ENCODE measurements at regions of chr6 and their contacts with region 1.

Region 1: GRCh38 chr6:90285611-90286381 is 10.8 kb downstream of the BACH2 start:
- DNase-seq: peak; percentile 51
- H3K4me3 Mint-ChIP-seq: peak overlapping the region; percentile 71
- H3K27ac Mint-ChIP-seq: peak overlapping the region; percentile 90
- H3K4me1 Mint-ChIP-seq: peaks cover 83% of the 10 kb centered on the region
- H3K27me3 Mint-ChIP-seq: no peaks in the 10 kb centered on the region

Region 2: GRCh38 chr6:89352278-89353117 is 933.3 kb before region 1 on chr6 and contains the start of gene UBE2J1:
- intact Hi-C with region 1: loop called (anchors 5 kb)
- DNase-seq: peak; percentile 74
- H3K4me3 Mint-ChIP-seq: peak within 1 kb of the TSS; percentile 96
- H3K27ac Mint-ChIP-seq: peak within 1 kb of the TSS; percentile 92
- H3K4me1 Mint-ChIP-seq: peaks cover 66% of the 10 kb centered on the region
- H3K27me3 Mint-ChIP-seq: no peaks in the 10 kb centered on the region
- total RNA-seq, gene UBE2J1: 34.4 and 34.8 TPM in 2 replicates

Region 3: GRCh38 chr6:90144396-90144795 is 141.4 kb before region 1 on chr6:
- intact Hi-C with region 1: loop called (anchors 1 kb)
- DNase-seq: no peak
- H3K4me3 Mint-ChIP-seq: peak overlapping the region; percentile 54
- H3K27ac Mint-ChIP-seq: peak overlapping the region; percentile 92
- H3K4me1 Mint-ChIP-seq: peaks cover 68% of the 10 kb centered on the region
- H3K27me3 Mint-ChIP-seq: no peaks in the 10 kb centered on the region

Region 4: GRCh38 chr6:90212274-90212673 is 73.5 kb before region 1 on chr6:
- intact Hi-C with region 1: no loop called
- DNase-seq: no peak
- H3K4me3 Mint-ChIP-seq: no peak overlapping the region
- H3K27ac Mint-ChIP-seq: no peak overlapping the region
- H3K4me1 Mint-ChIP-seq: peaks cover 37% of the 10 kb centered on the region
- H3K27me3 Mint-ChIP-seq: no peaks in the 10 kb centered on the region

Region 5: DNA sequence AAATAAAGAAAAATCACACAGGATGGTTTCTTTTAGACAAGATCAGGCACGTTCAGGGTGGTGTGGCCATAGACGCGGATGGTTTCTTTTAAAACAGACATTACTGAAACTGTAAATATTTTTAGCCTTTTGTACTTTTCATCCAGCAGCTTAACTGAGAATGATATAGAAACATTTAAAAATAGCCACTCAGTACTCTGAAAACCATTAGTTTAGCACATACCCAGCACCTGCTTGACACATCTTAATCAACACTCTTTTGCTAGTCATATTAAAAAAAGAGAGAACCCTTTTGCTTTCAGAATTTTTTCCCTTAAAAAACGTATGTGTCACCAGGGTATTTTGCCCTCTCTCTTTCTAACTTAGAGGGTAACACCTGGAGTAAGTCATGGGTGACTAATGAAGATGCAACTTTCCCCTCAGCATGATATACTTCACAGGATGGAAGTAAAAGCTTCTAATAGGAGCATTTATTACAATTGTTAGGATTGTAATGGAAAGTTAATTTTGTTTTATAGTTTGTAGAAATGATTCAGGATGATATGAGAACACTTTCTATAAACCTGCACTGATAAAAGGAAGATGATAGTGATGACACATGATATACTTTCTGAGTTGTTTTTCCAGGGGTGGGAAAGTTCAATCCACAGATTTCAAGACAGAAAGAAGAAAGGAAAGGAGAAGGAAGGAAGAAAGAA is 34.4 kb before region 1 on chr6:
- intact Hi-C with region 1: loop called (anchors 1 kb)
- DNase-seq: no peak
- H3K4me3 Mint-ChIP-seq: peak overlapping the region; percentile 48
- H3K27ac Mint-ChIP-seq: peak overlapping the region; percentile 83
- H3K4me1 Mint-ChIP-seq: peaks cover 71% of the 10 kb centered on the region
- H3K27me3 Mint-ChIP-seq: no peaks in the 10 kb centered on the region

Region 6: DNA sequence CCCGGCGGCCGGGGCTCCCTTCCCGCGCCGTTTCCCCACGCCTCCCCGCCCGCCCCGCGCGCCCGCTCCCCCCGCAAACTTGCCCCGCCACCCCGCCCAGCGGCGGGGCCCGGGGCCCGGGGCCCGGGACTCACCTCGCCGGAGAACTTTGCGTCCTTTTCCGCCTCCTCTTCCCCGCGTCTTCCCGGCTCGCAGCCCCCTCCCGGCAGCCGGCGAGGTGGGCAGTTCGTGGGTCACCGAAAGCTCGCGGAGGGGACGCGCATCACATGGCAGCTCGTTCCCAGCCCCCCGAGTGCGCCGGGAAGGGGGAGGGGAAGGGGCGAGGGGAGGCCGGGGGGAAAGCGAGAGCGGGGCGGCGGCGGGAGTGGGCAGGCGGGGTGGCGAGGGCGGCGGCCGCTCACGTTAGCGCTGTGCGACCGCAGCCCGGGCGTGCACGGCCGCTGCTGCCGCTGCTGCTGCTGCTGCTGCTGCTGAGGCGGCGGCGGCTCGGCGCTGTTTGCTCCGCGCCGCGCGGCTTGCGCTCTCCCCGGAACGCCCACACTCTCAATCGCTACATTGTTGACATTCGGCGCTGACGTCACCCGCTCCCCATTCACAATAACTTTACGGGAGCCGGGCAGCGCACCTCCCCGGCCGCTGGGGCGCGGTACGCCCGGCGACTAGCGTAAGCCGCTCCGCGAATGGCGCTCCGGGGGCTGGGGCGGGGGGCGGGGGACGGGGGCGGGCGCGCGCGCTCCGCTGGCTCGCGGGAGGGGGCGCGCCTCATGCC is 10.7 kb after region 1 on chr6 and contains the start of gene BACH2:
- intact Hi-C with region 1: loop called (anchors 1 kb)
- DNase-seq: peak; percentile 91
- H3K4me3 Mint-ChIP-seq: peak within 1 kb of the TSS; percentile 91
- H3K27ac Mint-ChIP-seq: peak within 1 kb of the TSS; percentile 86
- H3K4me1 Mint-ChIP-seq: peaks cover 50% of the 10 kb centered on the region
- H3K27me3 Mint-ChIP-seq: peaks cover 13% of the 10 kb centered on the region
- total RNA-seq, gene BACH2: 88.8 and 89.7 TPM in 2 replicates

Region 7: GRCh38 chr6:90411292-90411781 is 125.5 kb after region 1 on chr6:
- intact Hi-C with region 1: loop called (anchors 1 kb)
- DNase-seq: peak; percentile 62
- H3K4me3 Mint-ChIP-seq: no peak overlapping the region
- H3K27ac Mint-ChIP-seq: peak overlapping the region; percentile 81
- H3K4me1 Mint-ChIP-seq: peaks cover 81% of the 10 kb centered on the region
- H3K27me3 Mint-ChIP-seq: no peaks in the 10 kb centered on the region

Region 8: GRCh38 chr6:90472744-90473143 is 186.9 kb after region 1 on chr6:
- intact Hi-C with region 1: loop called (anchors 1 kb)
- DNase-seq: peak; percentile 57
- H3K4me3 Mint-ChIP-seq: peak overlapping the region; percentile 72
- H3K27ac Mint-ChIP-seq: peak overlapping the region; percentile 93
- H3K4me1 Mint-ChIP-seq: peaks cover 94% of the 10 kb centered on the region
- H3K27me3 Mint-ChIP-seq: no peaks in the 10 kb centered on the region